ENCODE measurements at regions of chr18 and their contacts with region 1.

Region 1: GRCh38 chr18:55234366-55235093 is 275.3 kb upstream of the CCDC68 start:
- DNase-seq: peak; percentile 79
- ATAC-seq: peak; percentile 92
- H3K4me3 ChIP-seq: no peak overlapping the region
- H3K27ac ChIP-seq: no peak overlapping the region
- H3K4me1 ChIP-seq: no peaks in the 10 kb centered on the region
- H3K27me3 ChIP-seq: no peaks in the 10 kb centered on the region
- CTCF ChIP-seq: peak; percentile 88
- POLR2A ChIP-seq: no peak
- RAD21 ChIP-seq: peak; percentile 95

Region 2: DNA sequence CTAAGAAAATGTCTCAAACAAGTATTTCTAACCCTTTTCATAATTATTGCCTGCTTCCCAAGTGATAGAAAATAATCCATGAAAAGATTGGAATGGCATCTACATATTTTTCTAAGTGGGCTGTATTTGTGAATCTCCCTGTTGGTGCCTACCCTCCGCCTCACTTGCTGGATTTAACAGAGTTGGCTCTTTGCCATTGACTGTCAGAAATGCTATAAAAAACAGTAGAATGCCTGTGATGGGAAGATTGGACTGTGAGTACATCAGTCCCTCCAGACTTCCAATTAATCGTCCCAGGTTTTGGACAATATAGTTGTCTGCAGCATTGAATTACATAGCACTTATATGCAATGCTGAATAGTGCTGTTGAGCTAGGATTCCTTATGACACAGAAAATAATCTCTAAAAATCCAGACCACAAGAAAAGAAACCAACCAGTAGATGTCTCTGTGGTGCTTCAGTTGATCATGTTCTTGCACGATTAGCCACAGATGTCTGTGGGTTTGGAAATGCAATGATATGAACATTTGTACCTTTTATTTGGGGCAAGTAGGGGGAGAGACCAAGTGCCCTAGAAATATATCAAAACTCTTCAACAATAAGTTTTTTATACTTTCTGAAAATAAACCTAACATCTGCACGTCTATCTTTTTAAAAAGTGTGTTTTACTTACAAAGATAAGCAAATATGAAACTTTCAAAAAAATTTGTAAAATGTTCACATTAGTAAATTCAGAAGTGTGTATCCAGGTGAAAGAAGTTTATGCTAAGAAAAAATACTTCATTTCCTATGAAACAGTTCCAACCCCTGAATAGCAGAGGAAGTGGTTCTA is 555.0 kb before region 1 on chr18:
- CTCF ChIA-PET with region 1: no interaction called
- POLR2A ChIA-PET with region 1: no interaction called
- dilution Hi-C with region 1: no loop called
- in situ Hi-C with region 1: no loop called
- intact Hi-C with region 1: loop called (anchors 2 kb)
- DNase-seq: peak; percentile 83
- ATAC-seq: peak; percentile 95
- H3K4me3 ChIP-seq: no peak overlapping the region
- H3K27ac ChIP-seq: no peak overlapping the region
- H3K4me1 ChIP-seq: no peaks in the 10 kb centered on the region
- H3K27me3 ChIP-seq: no peaks in the 10 kb centered on the region
- CTCF ChIP-seq: peak; percentile 84
- POLR2A ChIP-seq: no peak
- RAD21 ChIP-seq: peak; percentile 93

Region 3: DNA sequence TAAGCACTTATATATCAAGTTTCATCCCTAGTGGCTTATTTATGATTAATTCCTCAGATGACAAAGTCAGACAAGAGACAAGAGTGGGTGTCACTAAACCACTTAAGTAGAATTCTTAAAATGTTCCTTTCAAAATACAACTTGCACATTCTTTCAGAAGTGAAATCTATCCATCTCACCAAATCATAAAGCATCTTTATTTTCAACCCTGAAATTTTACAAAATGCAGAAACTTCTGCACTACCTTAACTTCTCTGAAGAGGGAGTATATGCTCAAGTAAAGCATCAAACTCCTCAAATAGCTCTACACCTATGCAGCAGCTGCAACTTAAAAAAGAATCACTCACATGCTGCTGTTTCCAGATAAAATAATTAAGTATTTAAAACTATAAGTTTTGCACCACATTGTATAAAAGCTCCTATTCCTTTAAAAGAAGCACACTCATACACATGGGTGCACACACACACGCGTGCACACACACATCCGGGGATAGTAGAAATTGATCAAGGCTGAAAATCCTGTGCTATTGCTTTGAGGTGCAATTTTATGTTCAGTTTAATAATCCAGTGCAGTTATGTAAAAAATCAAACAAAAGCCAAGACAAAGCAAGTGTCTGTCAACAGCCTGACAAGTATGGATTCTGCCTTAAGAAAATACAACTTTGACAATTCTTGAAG is 109.0 kb after region 1 on chr18:
- CTCF ChIA-PET with region 1: interaction called, 3 read pairs
- POLR2A ChIA-PET with region 1: no interaction called
- dilution Hi-C with region 1: no loop called
- in situ Hi-C with region 1: no loop called
- intact Hi-C with region 1: loop called (anchors 5 kb)
- DNase-seq: peak; percentile 64
- ATAC-seq: peak; percentile 84
- H3K4me3 ChIP-seq: no peak overlapping the region
- H3K27ac ChIP-seq: no peak overlapping the region
- H3K4me1 ChIP-seq: peaks cover 10% of the 10 kb centered on the region
- H3K27me3 ChIP-seq: no peaks in the 10 kb centered on the region
- CTCF ChIP-seq: peak; percentile 65
- POLR2A ChIP-seq: no peak
- RAD21 ChIP-seq: peak; percentile 80

Region 4: GRCh38 chr18:55415258-55415871 is 180.8 kb after region 1 on chr18:
- CTCF ChIA-PET with region 1: interaction called, 8 read pairs
- POLR2A ChIA-PET with region 1: no interaction called
- dilution Hi-C with region 1: no loop called
- in situ Hi-C with region 1: loop called (anchors 25 kb)
- intact Hi-C with region 1: loop called (anchors 2 kb)
- DNase-seq: peak; percentile 86
- ATAC-seq: peak; percentile 92
- H3K4me3 ChIP-seq: no peak overlapping the region
- H3K27ac ChIP-seq: no peak overlapping the region
- H3K4me1 ChIP-seq: peaks cover 9% of the 10 kb centered on the region
- H3K27me3 ChIP-seq: no peaks in the 10 kb centered on the region
- CTCF ChIP-seq: peak; percentile 90
- POLR2A ChIP-seq: no peak
- RAD21 ChIP-seq: peak; percentile 94

Region 5: DNA sequence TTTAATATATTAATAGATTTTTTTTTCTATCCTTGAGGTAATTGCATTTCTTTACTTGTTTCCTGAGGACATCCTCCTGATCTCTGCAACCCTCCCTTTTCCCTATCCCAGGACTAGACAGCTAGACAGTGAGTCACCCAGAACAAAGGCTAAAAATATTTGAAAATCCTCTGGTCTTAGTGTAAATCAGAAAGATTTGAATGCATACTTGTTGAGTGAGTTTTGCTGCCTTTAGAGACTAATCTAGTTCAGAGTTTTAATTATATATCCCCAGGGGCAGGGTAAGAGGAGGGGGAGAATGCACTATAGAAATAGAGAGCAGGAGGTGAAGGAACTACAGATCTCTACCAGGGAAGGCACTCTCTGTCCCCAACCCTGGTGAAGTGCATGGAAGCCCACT is 555.8 kb after region 1 on chr18:
- CTCF ChIA-PET with region 1: no interaction called
- POLR2A ChIA-PET with region 1: no interaction called
- dilution Hi-C with region 1: no loop called
- in situ Hi-C with region 1: loop called (anchors 5 kb)
- intact Hi-C with region 1: no loop called
- DNase-seq: peak; percentile 90
- ATAC-seq: peak; percentile 88
- H3K4me3 ChIP-seq: no peak overlapping the region
- H3K27ac ChIP-seq: peak overlapping the region; percentile 76
- H3K4me1 ChIP-seq: peaks cover 16% of the 10 kb centered on the region
- H3K27me3 ChIP-seq: no peaks in the 10 kb centered on the region
- CTCF ChIP-seq: no peak
- POLR2A ChIP-seq: no peak
- RAD21 ChIP-seq: no peak